ENCODE measurements at regions of chr1 and their contacts with region 1.

Region 1: GRCh38 chr1:115052454-115053083 is 22.9 kb downstream of the TSHB start:
- DNase-seq: peak; percentile 73
- ATAC-seq: peak; percentile 94
- H3K4me3 Mint-ChIP-seq: no peak overlapping the region
- H3K27ac Mint-ChIP-seq: no peak overlapping the region
- H3K4me1 Mint-ChIP-seq: no peaks in the 10 kb centered on the region; the same call in 1 of the 2 replicates
- H3K27me3 Mint-ChIP-seq: no peaks in the 10 kb centered on the region
- CTCF ChIP-seq: peak; percentile 74

Region 2: GRCh38 chr1:115041654-115042053 is 10.9 kb before region 1 on chr1:
- CTCF ChIA-PET with region 1: interaction called, 36 read pairs
- POLR2A ChIA-PET with region 1: no interaction called
- DNase-seq: no peak
- ATAC-seq: peak; percentile 90
- H3K4me3 Mint-ChIP-seq: no peak overlapping the region
- H3K27ac Mint-ChIP-seq: no peak overlapping the region
- H3K4me1 Mint-ChIP-seq: peaks cover 1% of the 10 kb centered on the region
- H3K27me3 Mint-ChIP-seq: no peaks in the 10 kb centered on the region
- CTCF ChIP-seq: peak; percentile 37; the same call in 1 of the 2 replicates

Region 3: GRCh38 chr1:115073298-115074087 is 20.9 kb after region 1 on chr1:
- CTCF ChIA-PET with region 1: interaction called, 11 read pairs
- POLR2A ChIA-PET with region 1: no interaction called
- DNase-seq: no peak
- ATAC-seq: no peak
- H3K4me3 Mint-ChIP-seq: no peak overlapping the region
- H3K27ac Mint-ChIP-seq: no peak overlapping the region
- H3K4me1 Mint-ChIP-seq: 0 out of 2 replicates have a peak, but pooled peaks cover 3% of the 10 kb centered on the region
- H3K27me3 Mint-ChIP-seq: no peaks in the 10 kb centered on the region; the same call in none of the 2 replicates
- CTCF ChIP-seq: no peak

Region 4: GRCh38 chr1:115089420-115090185 is 37.0 kb after region 1 on chr1 and contains the start of gene TSPAN2:
- CTCF ChIA-PET with region 1: interaction called, 27 read pairs
- POLR2A ChIA-PET with region 1: interaction called, 5 read pairs
- DNase-seq: peak; percentile 95
- ATAC-seq: peak; percentile 91
- H3K4me3 Mint-ChIP-seq: peak within 1 kb of the TSS; percentile 92
- H3K27ac Mint-ChIP-seq: peak within 1 kb of the TSS; percentile 90; the same call in 1 of the 2 replicates
- H3K4me1 Mint-ChIP-seq: peaks cover 36% of the 10 kb centered on the region
- H3K27me3 Mint-ChIP-seq: peaks cover 16% of the 10 kb centered on the region
- CTCF ChIP-seq: no peak
- total RNA-seq, gene TSPAN2: 12.0 to 14.8 TPM (median 14.6 TPM) in 3 replicates

Region 5: DNA sequence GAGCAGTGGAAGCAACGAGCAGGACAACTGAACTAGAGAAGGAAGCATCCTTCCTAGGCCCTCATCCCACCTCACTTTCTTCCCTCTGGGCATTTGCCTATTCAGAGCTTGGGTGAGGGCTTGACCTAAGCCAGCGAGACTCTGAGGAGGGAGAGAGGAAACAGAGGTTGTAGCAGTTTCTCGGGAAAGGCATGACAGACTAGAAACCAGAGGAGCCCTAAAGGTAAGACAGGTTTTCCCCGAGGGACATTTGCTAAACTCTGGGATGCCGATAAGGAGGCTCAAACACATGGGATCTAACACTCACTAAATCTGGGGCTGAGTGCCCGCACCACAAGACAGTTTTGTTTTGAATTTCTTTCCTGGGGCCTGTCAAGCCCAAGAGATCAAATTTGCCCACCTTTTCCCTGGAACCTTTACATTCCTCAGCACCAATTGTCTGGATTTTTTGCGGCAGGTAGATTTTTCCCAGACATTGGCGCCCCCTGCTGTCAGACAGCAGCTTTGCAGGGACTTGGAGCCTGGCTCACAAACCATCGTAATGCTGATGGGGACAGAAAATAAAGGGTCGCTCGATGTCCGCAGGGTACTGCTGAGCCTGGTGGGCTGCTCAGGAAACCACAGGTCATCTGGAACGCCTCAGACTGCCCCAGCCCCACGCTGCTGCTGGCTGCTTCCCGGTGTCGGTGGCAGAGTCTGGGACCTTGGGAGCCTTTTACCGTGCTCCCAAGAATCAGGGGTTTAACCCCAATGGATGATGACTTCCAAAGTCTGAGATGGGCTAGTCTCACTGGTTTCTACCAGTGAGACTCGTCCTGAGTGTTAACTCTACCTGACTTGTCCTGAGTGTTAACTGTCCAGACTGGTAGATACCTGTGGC is 60.2 kb after region 1 on chr1:
- CTCF ChIA-PET with region 1: interaction called, 17 read pairs
- POLR2A ChIA-PET with region 1: no interaction called
- DNase-seq: peak; percentile 79
- ATAC-seq: peak; percentile 92
- H3K4me3 Mint-ChIP-seq: peak overlapping the region; percentile 41
- H3K27ac Mint-ChIP-seq: peak overlapping the region; percentile 70
- H3K4me1 Mint-ChIP-seq: peaks cover 28% of the 10 kb centered on the region
- H3K27me3 Mint-ChIP-seq: peaks cover 5% of the 10 kb centered on the region
- CTCF ChIP-seq: peak; percentile 89

Measured in WTC11 (cell line).